Activated T-helper 1 cell treated with anti-CD3 and anti-CD28 coated beads, Interleukin-12 subunit alpha, Interleukin-12 subunit beta, Interleukin-2, Interleukin-4 antibody, amounts not matched to agents 30 ng/mL and 10 ng/mL and 1 ng/mL, durations not matched to agents 14 hours and 24 hours and 36 hours (primary cell): ENCODE measurements at regions of chr11 and their contacts with region 1.

Region 1: DNA sequence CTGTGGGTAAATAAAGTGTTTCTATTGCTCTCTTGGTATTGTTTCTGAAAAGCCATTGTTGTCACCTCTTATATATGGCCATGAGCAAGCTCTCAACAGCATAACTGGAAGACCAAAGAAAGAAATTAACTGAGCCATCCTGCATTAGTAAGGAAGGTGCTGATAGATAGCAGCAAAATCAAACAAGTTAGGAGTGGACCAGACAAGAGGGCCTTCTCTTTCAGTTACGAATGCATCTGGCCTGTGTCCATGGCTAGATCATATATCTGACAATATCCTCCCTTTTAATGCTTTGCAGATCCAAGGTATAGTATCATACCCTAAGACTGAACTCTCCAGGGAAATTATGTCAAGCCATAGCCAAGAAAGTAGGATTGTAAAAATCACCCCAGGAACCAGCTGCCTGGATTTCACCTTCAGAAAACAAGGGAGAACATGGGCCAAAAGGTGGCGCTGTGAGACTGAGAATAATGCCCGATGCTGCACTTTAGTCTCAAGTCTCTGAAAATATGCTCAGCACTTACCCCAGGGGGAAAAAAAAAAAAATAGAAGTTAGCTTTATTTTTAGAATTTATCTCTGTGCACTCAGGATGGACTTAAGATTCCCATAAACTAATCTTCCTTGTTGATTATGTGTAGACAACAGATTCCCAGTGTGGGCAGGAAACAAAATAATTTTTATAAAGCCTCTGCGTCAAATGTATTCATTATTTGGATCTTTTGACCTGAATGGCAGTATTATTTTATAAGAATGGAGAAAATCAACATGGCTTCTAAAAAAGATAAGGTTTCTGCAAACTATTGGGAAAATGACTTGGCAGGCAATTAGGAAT is 415.1 kb downstream of the ETS1 start:
- DNase-seq: peak; percentile 75
- H3K4me3 Mint-ChIP-seq: no peak overlapping the region
- H3K27ac Mint-ChIP-seq: peak overlapping the region; percentile 25
- H3K4me1 Mint-ChIP-seq: peaks cover 25% of the 10 kb centered on the region
- H3K27me3 Mint-ChIP-seq: no peaks in the 10 kb centered on the region

Region 2: DNA sequence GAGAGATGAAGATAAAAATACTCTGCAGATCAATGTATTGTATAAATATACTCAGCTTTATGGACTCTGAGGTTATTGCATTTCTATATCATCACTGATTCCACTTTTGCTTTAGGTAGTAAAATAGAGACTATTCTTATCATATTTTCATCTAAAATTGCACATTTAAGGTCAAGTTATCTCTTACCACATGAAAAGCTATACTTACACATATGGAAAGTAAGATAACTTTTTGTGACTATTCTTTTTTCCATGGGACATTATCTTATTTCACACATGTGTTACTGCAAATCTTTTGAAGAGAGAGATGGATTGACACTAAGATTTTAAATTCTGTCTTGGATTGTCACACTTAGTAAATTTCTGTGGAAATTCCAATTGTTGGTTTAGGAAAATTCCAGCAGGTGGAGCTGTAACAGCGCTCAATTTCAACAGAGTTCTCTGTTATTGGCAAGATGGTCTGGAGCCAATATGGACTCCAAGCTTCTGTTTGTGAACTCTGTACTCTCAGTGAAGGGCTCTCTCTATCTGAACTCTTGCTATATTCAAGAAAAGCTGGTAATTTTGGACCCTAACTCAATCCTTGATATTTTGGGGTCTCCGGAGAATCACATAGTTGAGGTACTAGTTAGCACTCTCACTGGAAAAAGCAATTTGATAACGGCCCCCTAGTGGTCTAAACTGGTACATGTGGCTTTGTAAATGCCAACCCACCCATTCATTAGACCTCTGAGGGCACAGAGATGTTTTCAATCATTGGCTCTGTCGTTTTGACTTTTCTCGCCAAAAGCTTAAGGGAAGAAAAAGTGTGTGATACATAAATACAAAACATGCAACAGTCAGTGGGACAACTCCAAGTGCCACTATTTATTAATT is 14.6 kb before region 1 on chr11:
- intact Hi-C with region 1: loop called (anchors 1 kb)
- DNase-seq: peak; percentile 44
- H3K4me3 Mint-ChIP-seq: peak overlapping the region; percentile 16
- H3K27ac Mint-ChIP-seq: peak overlapping the region; percentile 66
- H3K4me1 Mint-ChIP-seq: peaks cover 13% of the 10 kb centered on the region
- H3K27me3 Mint-ChIP-seq: peaks cover 16% of the 10 kb centered on the region

Region 3: GRCh38 chr11:128232588-128232987 is 60.3 kb after region 1 on chr11:
- intact Hi-C with region 1: loop called (anchors 1 kb)
- DNase-seq: no peak
- H3K4me3 Mint-ChIP-seq: peak overlapping the region; percentile 58
- H3K27ac Mint-ChIP-seq: peak overlapping the region; percentile 85
- H3K4me1 Mint-ChIP-seq: peaks cover 58% of the 10 kb centered on the region
- H3K27me3 Mint-ChIP-seq: peaks cover 2% of the 10 kb centered on the region

Region 4: GRCh38 chr11:128472128-128473089 is 300.1 kb after region 1 on chr11:
- intact Hi-C with region 1: loop called (anchors 5 kb)
- DNase-seq: peak; percentile 61
- H3K4me3 Mint-ChIP-seq: peak overlapping the region; percentile 80
- H3K27ac Mint-ChIP-seq: peak overlapping the region; percentile 95
- H3K4me1 Mint-ChIP-seq: peaks cover 94% of the 10 kb centered on the region
- H3K27me3 Mint-ChIP-seq: no peaks in the 10 kb centered on the region

Region 5: GRCh38 chr11:128757235-128757711 is 585.0 kb after region 1 on chr11:
- intact Hi-C with region 1: loop called (anchors 1 kb)
- DNase-seq: peak; percentile 55
- H3K4me3 Mint-ChIP-seq: peak overlapping the region; percentile 63
- H3K27ac Mint-ChIP-seq: peak overlapping the region; percentile 95
- H3K4me1 Mint-ChIP-seq: peaks cover 68% of the 10 kb centered on the region
- H3K27me3 Mint-ChIP-seq: no peaks in the 10 kb centered on the region

Region 6: GRCh38 chr11:128859563-128860441 is 687.5 kb after region 1 on chr11:
- intact Hi-C with region 1: loop called (anchors 1 kb)
- DNase-seq: peak; percentile 71
- H3K4me3 Mint-ChIP-seq: no peak overlapping the region
- H3K27ac Mint-ChIP-seq: no peak overlapping the region
- H3K4me1 Mint-ChIP-seq: peaks cover 6% of the 10 kb centered on the region
- H3K27me3 Mint-ChIP-seq: peaks cover 13% of the 10 kb centered on the region